Colonic mucosa (tissue), 4 donors: ENCODE measurements at regions of chr1 and their contacts with region 1.

Region 1: DNA sequence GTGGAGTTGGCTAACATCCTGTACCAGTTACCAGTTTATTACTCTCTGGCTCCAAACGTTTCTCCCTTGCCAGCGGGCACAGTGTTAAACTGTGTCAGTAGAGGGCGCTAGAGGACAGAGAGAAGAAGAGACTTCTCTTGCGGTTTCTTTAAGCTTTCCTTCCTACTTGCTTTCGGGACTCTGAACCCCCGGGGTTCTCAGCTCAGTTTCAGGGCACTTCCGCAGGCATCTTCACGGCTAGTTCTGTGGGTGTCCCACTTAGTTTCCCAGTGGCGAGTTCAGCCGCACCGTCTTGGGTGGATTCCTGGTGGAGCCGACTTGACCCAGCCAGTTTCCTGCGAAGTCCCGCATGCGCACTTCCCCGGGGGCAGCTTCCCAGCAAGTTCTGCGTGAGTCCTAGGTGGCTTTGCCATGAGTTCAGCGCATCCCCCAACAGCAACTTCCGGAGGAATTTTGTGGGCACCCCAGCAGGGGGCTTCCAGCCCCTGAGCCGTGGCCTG is 37.9 kb upstream of the BTG2 start:
- DNase-seq: peak; percentile 92
- H3K4me3 ChIP-seq: peak overlapping the region; percentile 29
- H3K27ac ChIP-seq: peak overlapping the region; percentile 39
- H3K4me1 ChIP-seq: no peaks in the 10 kb centered on the region
- H3K27me3 ChIP-seq: no peaks in the 10 kb centered on the region
- CTCF ChIP-seq: peak; percentile 89

Region 2: GRCh38 chr1:203480525-203481084 is 213.2 kb after region 1 on chr1:
- intact Hi-C with region 1: loop called (anchors 10 kb)
- DNase-seq: peak; percentile 84
- H3K4me3 ChIP-seq: no peak overlapping the region
- H3K27ac ChIP-seq: peak overlapping the region; percentile 52
- H3K4me1 ChIP-seq: peaks cover 5% of the 10 kb centered on the region
- H3K27me3 ChIP-seq: no peaks in the 10 kb centered on the region
- CTCF ChIP-seq: no peak